ENCODE measurements at regions of chr3 and their contacts with region 1.

Region 1: GRCh38 chr3:152574461-152575079 is 260.4 kb upstream of the P2RY1 start:
- DNase-seq: peak; percentile 35
- H3K4me3 ChIP-seq: no peak overlapping the region
- H3K27ac ChIP-seq: no peak overlapping the region
- H3K4me1 ChIP-seq: no peaks in the 10 kb centered on the region
- CTCF ChIP-seq: peak; percentile 78

Region 2: GRCh38 chr3:152183473-152183872 is 391.1 kb before region 1 on chr3:
- CTCF ChIA-PET with region 1: no interaction called
- POLR2A ChIA-PET with region 1: no interaction called
- intact Hi-C with region 1: loop called (anchors 10 kb)
- DNase-seq: peak; percentile 79
- H3K4me3 ChIP-seq: no peak overlapping the region
- H3K27ac ChIP-seq: no peak overlapping the region
- H3K4me1 ChIP-seq: peaks cover 3% of the 10 kb centered on the region
- CTCF ChIP-seq: peak; percentile 98

Region 3: DNA sequence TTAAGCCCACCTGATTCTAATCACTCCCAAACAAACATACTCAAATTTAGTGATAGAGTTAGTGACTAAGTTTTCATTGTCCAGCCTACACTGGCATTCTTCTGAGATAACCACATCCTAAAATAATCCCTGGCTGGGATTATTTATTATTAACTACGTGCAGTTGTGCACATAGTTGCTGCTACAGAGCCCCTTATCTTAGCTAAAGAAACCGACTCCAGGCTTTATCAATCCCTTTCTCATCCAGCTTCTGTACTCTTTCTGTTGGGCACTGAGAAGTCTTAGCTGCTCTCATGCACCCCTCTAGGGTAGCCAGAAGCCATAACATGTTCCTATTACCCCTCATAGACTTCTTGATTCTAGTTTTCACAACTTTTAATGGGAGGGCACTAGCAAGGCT is 97.1 kb before region 1 on chr3:
- CTCF ChIA-PET with region 1: no interaction called
- POLR2A ChIA-PET with region 1: no interaction called
- intact Hi-C with region 1: loop called (anchors 2 kb)
- DNase-seq: no peak
- H3K4me3 ChIP-seq: no peak overlapping the region
- H3K27ac ChIP-seq: no peak overlapping the region
- H3K4me1 ChIP-seq: peaks cover 6% of the 10 kb centered on the region
- CTCF ChIP-seq: no peak